IMR-90 (cell line): ENCODE measurements at regions of chr6 and their contacts with region 1.

Region 1: GRCh38 chr6:133916650-133917151 is 27.8 kb downstream of the TCF21 start:
- DNase-seq: peak; percentile 91
- ATAC-seq: peak; percentile 88
- H3K4me3 ChIP-seq: no peak overlapping the region
- H3K27ac ChIP-seq: peak overlapping the region; percentile 30; the same call in 1 of the 2 replicates
- H3K4me1 ChIP-seq: peaks cover 6% of the 10 kb centered on the region; the same call in 1 of the 2 replicates
- H3K27me3 ChIP-seq: no peaks in the 10 kb centered on the region
- CTCF ChIP-seq: peak; percentile 94
- POLR2A ChIP-seq: peak; percentile 44; the same call in 1 of the 2 replicates
- RAD21 ChIP-seq: peak; percentile 95

Region 2: DNA sequence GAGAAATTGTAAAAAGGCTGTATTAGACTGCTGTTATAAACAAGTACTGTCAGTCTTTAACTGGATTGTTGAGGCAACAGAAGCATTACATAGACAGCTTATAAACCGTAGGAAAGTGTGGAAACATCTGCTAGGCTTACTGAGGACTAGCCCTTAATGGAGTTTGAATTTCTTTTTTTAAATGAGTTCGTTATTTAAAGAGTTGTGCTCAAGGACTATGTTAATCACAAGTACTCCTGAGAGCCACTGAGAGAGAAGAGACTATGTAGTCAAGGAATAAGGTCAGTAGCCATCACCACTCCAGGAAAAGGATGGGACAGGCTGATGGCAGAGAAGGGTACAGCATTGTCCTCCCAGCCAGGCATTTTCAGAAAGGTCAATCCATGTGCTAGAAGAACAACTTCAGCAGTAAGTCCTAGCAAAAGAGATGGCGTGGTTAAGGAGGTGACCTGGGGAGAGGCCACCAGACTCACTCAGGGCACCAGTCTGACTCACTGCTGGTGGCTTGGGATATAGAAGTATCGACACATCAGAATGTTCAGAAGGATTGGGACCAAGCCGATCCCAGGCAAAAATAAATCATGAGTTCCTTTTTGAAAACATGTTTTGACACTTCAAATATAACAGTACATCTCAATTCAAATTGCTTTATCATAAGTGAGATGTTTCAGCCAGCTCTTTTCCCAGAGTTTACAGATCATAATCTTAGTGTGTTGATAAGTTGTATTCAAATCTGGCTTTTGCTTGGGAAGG is 1095.9 kb before region 1 on chr6:
- CTCF ChIA-PET with region 1: no interaction called
- POLR2A ChIA-PET with region 1: no interaction called
- dilution Hi-C with region 1: no loop called
- in situ Hi-C with region 1: loop called (anchors 10 kb)
- intact Hi-C with region 1: no loop called
- DNase-seq: peak; percentile 52
- ATAC-seq: peak; percentile 41
- H3K4me3 ChIP-seq: no peak overlapping the region
- H3K27ac ChIP-seq: peak overlapping the region; percentile 42; the same call in 1 of the 2 replicates
- H3K4me1 ChIP-seq: peaks cover 4% of the 10 kb centered on the region
- H3K27me3 ChIP-seq: no peaks in the 10 kb centered on the region
- CTCF ChIP-seq: no peak
- POLR2A ChIP-seq: peak; percentile 45
- RAD21 ChIP-seq: no peak

Region 3: GRCh38 chr6:132962936-132963868 is 953.5 kb before region 1 on chr6:
- CTCF ChIA-PET with region 1: no interaction called
- POLR2A ChIA-PET with region 1: no interaction called
- dilution Hi-C with region 1: no loop called
- in situ Hi-C with region 1: loop called (anchors 25 kb)
- intact Hi-C with region 1: no loop called
- DNase-seq: peak; percentile 77
- ATAC-seq: peak; percentile 60
- H3K4me3 ChIP-seq: no peak overlapping the region
- H3K27ac ChIP-seq: no peak overlapping the region
- H3K4me1 ChIP-seq: peaks cover 9% of the 10 kb centered on the region
- H3K27me3 ChIP-seq: no peaks in the 10 kb centered on the region
- CTCF ChIP-seq: peak; percentile 71
- POLR2A ChIP-seq: no peak
- RAD21 ChIP-seq: peak; percentile 82

Region 4: DNA sequence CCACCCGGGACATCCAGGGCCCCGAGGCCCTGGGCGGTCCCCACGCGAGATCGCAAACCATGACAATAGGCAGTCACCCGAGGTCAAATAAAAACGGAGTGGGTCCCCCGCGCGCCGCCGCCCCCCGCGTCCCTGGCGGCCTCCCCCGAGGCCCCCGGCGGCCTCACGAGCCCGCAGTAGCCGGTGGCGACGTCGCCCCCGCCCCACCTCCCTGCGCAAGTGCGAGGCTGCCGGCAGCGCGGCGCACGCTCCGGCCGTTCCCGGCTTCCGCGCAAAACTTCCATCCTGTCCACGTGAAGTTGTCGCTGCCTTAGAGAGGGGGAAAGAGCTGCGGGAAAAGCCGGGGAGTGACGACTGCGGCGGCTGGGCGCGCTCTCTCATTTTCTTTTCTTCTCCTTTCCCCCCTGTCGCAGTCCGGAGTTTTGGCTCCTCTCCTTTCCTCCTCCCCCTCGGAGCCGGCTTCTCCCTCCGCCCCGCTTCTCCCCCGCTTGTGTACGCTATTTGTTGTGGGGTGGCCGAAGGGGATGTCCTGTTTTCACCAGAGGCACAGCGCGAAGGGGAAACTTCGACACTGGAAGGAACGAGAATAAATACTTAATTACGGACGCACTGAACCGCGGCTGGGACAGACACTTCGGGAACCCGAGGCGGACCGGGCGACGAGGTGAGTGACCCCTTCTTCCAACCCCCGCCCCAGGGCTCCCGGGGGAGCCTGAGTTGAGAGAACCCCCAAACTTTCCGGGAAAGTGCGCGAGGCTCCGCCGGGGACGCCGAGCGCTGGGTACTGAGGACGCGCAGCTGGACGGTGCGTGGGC is 675.4 kb before region 1 on chr6 and contains the start of gene EYA4:
- CTCF ChIA-PET with region 1: no interaction called
- POLR2A ChIA-PET with region 1: no interaction called
- dilution Hi-C with region 1: no loop called
- in situ Hi-C with region 1: no loop called
- intact Hi-C with region 1: loop called (anchors 5 kb)
- DNase-seq: peak; percentile 74
- ATAC-seq: peak; percentile 73
- H3K4me3 ChIP-seq: peak within 1 kb of the TSS; percentile 77
- H3K27ac ChIP-seq: peak within 1 kb of the TSS; percentile 97
- H3K4me1 ChIP-seq: peaks cover 3% of the 10 kb centered on the region
- H3K27me3 ChIP-seq: no peaks in the 10 kb centered on the region
- CTCF ChIP-seq: 0 out of 2 replicates have a peak, but pooled peaks have one; percentile 13
- POLR2A ChIP-seq: no peak
- RAD21 ChIP-seq: no peak
- total RNA-seq, gene EYA4: 11.1 and 11.9 TPM in 2 replicates

Region 5: DNA sequence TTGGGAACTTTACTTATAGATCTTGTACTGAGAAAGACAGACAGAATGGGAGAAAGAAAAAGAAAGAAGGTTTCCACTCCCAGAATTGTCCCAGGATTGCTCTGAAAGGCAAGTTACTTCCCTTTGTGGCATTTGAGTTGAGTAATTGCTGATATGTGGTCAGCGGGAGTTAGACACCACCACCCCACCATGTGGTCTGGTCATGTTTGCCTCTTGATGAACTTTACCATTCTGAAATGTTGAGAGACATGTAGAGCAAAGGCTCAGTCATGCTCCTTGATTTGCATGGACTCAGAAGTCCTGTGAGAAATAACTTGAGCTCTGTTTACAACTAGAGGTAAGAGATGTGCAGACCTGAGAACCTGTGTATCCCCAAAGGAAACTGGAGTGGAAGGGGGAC is 10.7 kb before region 1 on chr6:
- CTCF ChIA-PET with region 1: interaction called, 11 read pairs
- POLR2A ChIA-PET with region 1: no interaction called
- dilution Hi-C with region 1: no loop called
- in situ Hi-C with region 1: no loop called
- intact Hi-C with region 1: no loop called
- DNase-seq: no peak
- ATAC-seq: no peak
- H3K4me3 ChIP-seq: no peak overlapping the region
- H3K27ac ChIP-seq: no peak overlapping the region
- H3K4me1 ChIP-seq: no peaks in the 10 kb centered on the region
- H3K27me3 ChIP-seq: no peaks in the 10 kb centered on the region
- CTCF ChIP-seq: no peak
- POLR2A ChIP-seq: no peak
- RAD21 ChIP-seq: no peak